ENCODE measurements at regions of chr4 and their contacts with region 1.

Region 1: DNA sequence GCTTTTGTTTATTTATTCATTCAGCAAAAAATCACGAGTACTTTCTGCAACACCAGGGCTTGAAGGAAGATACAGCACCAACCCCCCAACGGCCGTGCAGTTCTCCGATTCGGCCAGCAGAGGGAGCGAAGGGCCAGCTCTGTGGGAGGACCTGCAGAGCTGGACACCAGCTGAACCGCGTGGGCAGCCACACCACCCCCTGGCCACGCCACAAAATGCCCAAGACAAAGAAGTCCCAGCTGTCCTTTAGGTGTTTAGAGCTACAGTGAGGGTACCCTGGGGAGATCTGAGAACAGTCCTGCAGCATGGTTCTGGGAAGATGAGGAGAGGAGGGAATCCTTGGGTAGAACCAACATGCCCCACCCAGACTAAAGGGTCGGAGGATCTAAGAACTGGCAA is 83.1 kb downstream of the RELL1 start:
- DNase-seq: peak; percentile 73 to 96
- H3K4me3 ChIP-seq: no peak overlapping the region
- CTCF ChIP-seq: peak in 1 of 3 donors; percentile 78
- POLR2A ChIP-seq: no peak

Region 2: DNA sequence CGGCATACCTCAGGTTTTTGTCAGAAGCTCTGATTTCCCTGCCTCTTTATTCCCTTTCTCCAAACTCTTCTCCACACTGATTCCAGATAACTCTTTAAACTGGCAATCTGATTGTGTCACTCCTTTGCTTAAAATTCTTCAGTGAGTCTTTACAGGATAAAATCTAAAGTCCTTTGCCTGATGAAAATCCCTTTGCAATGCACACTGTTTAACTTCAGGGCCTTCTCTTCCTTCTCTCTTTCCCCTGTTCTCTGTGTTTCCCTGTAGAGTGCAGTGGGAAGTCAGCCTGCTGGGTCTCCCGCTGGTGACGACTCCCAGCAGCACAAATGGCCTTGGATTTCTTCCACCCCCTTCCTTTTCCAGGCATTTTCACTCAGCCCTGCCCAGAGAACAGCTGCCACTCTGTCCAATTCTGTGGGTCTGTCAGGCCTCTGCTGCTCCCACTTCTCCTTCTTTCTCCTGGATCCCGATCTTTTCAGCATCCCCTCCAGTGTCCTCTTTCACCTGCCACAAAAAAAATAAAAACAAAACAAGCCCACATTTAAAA is 548.5 kb before region 1 on chr4:
- intact Hi-C with region 1: no loop called
- DNase-seq: no peak
- H3K4me3 ChIP-seq: no peak overlapping the region
- CTCF ChIP-seq: no peak
- POLR2A ChIP-seq: no peak

Region 3: GRCh38 chr4:37648096-37648817 is 45.2 kb after region 1 on chr4:
- intact Hi-C with region 1: no loop called
- DNase-seq: peak in 1 of 2 donors; percentile 67
- H3K4me3 ChIP-seq: no peak overlapping the region
- CTCF ChIP-seq: no peak
- POLR2A ChIP-seq: no peak

Region 4: GRCh38 chr4:37802068-37802666 is 199.1 kb after region 1 on chr4:
- intact Hi-C with region 1: loop called (anchors 2 kb)
- DNase-seq: no peak
- H3K4me3 ChIP-seq: no peak overlapping the region
- CTCF ChIP-seq: peak in 1 of 3 donors; percentile 10
- POLR2A ChIP-seq: no peak

Measured in lower leg skin (tissue), 4 donors.